ENCODE measurements at regions of chrX and their contacts with region 1.

Region 1: DNA sequence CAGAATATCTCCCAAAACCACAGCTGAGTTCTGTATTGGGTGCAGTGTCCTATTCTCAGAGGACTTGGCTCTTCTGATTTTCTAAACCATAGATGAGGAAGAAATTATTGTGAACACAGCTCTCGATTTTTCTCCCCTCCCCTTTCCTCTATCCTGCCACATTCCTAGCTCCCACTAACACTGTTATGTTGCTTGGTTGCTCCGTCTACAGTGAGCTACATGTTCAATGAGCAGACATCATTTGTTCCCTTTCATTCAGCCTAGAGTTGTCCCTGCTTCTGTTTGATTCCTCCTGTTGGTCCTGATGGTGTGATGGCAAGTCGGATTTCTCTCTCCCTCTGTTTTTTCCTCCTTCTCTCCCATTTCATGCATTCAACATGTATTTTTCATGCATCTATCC is 65.9 kb downstream of the DIPK2B start:
- DNase-seq: no peak
- H3K4me3 ChIP-seq: no peak overlapping the region
- H3K27ac ChIP-seq: no peak overlapping the region
- H3K4me1 ChIP-seq: no peaks in the 10 kb centered on the region
- H3K27me3 ChIP-seq: no peaks in the 10 kb centered on the region
- CTCF ChIP-seq: no peak
- POLR2A ChIP-seq: no peak

Region 2: GRCh38 chrX:45172890-45173289 is 38.1 kb after region 1 on chrX:
- intact Hi-C with region 1: no loop called
- DNase-seq: peak in 1 of 2 donors; percentile 47
- H3K4me3 ChIP-seq: no peak overlapping the region
- H3K27ac ChIP-seq: no peak overlapping the region
- H3K4me1 ChIP-seq: no peaks in the 10 kb centered on the region
- H3K27me3 ChIP-seq: no peaks in the 10 kb centered on the region
- CTCF ChIP-seq: no peak
- POLR2A ChIP-seq: no peak

Region 3: GRCh38 chrX:45240301-45240700 is 105.5 kb after region 1 on chrX:
- intact Hi-C with region 1: no loop called
- DNase-seq: no peak
- H3K4me3 ChIP-seq: no peak overlapping the region
- H3K27ac ChIP-seq: no peak overlapping the region
- H3K4me1 ChIP-seq: no peaks in the 10 kb centered on the region
- H3K27me3 ChIP-seq: no peaks in the 10 kb centered on the region
- CTCF ChIP-seq: no peak
- POLR2A ChIP-seq: no peak

Region 4: GRCh38 chrX:45258731-45259402 is 124.1 kb after region 1 on chrX:
- intact Hi-C with region 1: no loop called
- DNase-seq: no peak
- H3K4me3 ChIP-seq: no peak overlapping the region
- H3K27ac ChIP-seq: no peak overlapping the region
- H3K4me1 ChIP-seq: no peaks in the 10 kb centered on the region
- H3K27me3 ChIP-seq: no peaks in the 10 kb centered on the region
- CTCF ChIP-seq: no peak
- POLR2A ChIP-seq: no peak

Region 5: GRCh38 chrX:45794323-45794994 is 659.7 kb after region 1 on chrX:
- intact Hi-C with region 1: loop called (anchors 5 kb)
- DNase-seq: no peak
- H3K4me3 ChIP-seq: no peak overlapping the region
- H3K27ac ChIP-seq: no peak overlapping the region
- H3K4me1 ChIP-seq: no peaks in the 10 kb centered on the region
- H3K27me3 ChIP-seq: no peaks in the 10 kb centered on the region
- CTCF ChIP-seq: no peak
- POLR2A ChIP-seq: no peak